IMR-90 (cell line): ENCODE measurements at regions of chr14 and their contacts with region 1.

Region 1: GRCh38 chr14:53946404-53947096 is 10.1 kb downstream of the BMP4 start:
- DNase-seq: no peak
- ATAC-seq: no peak
- H3K4me3 ChIP-seq: no peak overlapping the region
- H3K27ac ChIP-seq: no peak overlapping the region
- H3K4me1 ChIP-seq: peaks cover 4% of the 10 kb centered on the region
- H3K27me3 ChIP-seq: no peaks in the 10 kb centered on the region; the same call in 1 of the 2 replicates
- CTCF ChIP-seq: no peak
- POLR2A ChIP-seq: no peak
- RAD21 ChIP-seq: no peak

Region 2: DNA sequence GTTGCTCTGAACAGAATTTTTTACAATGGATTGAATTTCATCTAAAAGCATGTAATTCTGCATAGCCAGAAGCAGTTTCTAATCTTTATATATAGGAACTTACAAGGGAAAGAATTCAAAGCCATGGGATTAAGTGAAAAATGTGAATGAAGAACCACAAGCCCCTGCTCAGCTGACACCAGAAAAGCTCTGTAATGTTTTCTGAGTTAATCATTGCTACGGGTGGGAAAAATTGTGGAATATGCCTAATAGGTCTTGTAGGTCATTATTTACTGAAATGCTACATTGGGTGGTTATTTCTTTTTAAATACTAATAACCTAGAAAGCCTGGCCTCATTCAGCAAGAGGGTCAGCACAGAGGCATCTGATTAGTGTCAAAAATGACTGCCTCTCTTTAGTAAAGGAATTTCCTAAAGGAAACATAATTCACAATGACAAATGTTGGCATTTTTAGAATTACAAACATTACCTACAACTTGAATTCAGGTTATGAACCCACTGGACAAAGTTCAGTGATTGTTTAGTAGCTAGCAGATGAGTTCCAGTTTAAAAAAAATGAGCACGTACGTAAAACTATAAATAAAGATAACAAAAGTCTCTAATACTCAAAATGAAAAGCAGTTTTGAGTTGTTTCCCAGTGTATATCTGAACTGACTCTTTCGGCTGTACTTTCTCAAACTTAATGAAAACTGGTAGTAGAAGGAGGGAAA is 65.2 kb before region 1 on chr14:
- CTCF ChIA-PET with region 1: no interaction called
- POLR2A ChIA-PET with region 1: no interaction called
- dilution Hi-C with region 1: no loop called
- in situ Hi-C with region 1: no loop called
- intact Hi-C with region 1: loop called (anchors 5 kb)
- DNase-seq: peak; percentile 56
- ATAC-seq: peak; percentile 78
- H3K4me3 ChIP-seq: no peak overlapping the region
- H3K27ac ChIP-seq: peak overlapping the region; percentile 46; the same call in 1 of the 2 replicates
- H3K4me1 ChIP-seq: peaks cover 4% of the 10 kb centered on the region
- H3K27me3 ChIP-seq: no peaks in the 10 kb centered on the region
- CTCF ChIP-seq: no peak
- POLR2A ChIP-seq: no peak
- RAD21 ChIP-seq: no peak

Region 3: DNA sequence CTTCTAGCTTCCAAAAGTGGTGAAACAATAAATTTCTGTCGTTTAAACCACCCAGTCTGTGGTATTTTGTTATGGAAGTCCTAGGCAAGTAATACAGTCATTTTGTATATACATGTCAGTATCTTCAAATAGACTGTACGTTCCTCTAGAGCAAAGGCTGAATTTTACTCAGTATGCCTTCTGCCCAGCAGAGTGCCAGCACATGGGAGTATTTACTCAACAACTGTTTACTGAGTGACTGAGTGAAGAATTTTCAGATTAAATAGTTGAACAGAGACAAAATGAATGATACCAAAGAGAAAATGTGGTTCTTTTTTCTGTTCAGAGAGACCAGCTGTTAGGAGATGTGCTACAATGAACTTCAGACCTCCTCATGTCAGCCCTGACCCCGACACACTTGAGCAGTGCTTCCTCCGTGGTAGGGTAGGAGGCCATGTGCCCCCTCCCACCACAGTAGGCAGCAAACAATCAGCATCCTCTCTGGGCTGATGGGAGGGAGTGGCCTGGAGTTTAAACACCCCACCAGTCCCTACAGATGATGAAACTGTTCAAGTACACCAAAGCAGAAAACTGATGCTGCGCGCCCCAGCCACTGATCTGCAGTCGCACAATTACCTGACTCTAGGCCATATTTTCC is 11.7 kb before region 1 on chr14:
- CTCF ChIA-PET with region 1: interaction called, 6 read pairs
- POLR2A ChIA-PET with region 1: interaction called, 11 read pairs
- dilution Hi-C with region 1: no loop called
- in situ Hi-C with region 1: no loop called
- intact Hi-C with region 1: no loop called
- DNase-seq: no peak
- ATAC-seq: no peak
- H3K4me3 ChIP-seq: no peak overlapping the region
- H3K27ac ChIP-seq: no peak overlapping the region
- H3K4me1 ChIP-seq: peaks cover 2% of the 10 kb centered on the region
- H3K27me3 ChIP-seq: no peaks in the 10 kb centered on the region
- CTCF ChIP-seq: no peak
- POLR2A ChIP-seq: no peak
- RAD21 ChIP-seq: no peak

Region 4: DNA sequence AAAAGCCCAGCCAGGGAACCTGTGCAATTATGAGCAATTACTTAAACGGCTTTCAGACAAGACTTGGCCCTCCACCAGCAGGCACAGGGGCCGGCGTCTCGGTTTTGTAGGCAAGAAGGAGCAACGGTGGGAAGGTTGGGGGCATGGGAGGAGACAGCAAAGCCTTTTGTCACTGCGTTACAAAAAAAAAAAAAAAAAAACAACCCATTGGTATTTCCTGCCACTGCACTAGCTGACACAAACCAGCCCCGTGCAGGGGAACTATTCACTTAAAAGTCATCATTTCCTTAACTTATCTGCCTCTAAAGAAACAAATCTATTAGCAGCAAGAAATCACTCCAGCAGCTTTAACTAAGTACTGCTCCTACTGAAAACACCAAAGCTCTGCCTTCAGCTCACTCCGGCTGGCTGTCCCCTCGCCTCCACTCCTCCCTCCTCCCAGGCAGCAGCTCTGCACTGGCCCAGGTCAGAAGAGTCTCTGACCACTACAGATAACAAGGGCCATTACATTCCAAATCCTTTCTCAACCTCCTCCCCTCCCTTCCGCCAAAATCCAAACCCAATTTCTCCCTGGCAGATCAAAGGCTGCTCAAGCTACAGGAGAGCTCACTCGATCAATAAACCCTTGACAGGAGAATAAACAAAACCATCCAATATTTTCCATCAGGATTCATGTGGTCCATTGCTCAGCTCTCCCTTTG is 345.1 kb after region 1 on chr14:
- CTCF ChIA-PET with region 1: no interaction called
- POLR2A ChIA-PET with region 1: no interaction called
- dilution Hi-C with region 1: no loop called
- in situ Hi-C with region 1: no loop called
- intact Hi-C with region 1: no loop called
- DNase-seq: no peak
- ATAC-seq: peak; percentile 37; the same call in 1 of the 2 replicates
- H3K4me3 ChIP-seq: no peak overlapping the region
- H3K27ac ChIP-seq: no peak overlapping the region
- H3K4me1 ChIP-seq: peaks cover 2% of the 10 kb centered on the region; the same call in 1 of the 2 replicates
- H3K27me3 ChIP-seq: peaks cover 26% of the 10 kb centered on the region
- CTCF ChIP-seq: no peak
- POLR2A ChIP-seq: no peak
- RAD21 ChIP-seq: no peak